Endothelial cell of umbilical vein (primary cell): ENCODE measurements at regions of chr3 and their contacts with region 1.

Region 1: GRCh38 chr3:110314512-110315114 is 757.0 kb upstream of the NECTIN3 start:
- DNase-seq: peak; percentile 56
- H3K4me3 ChIP-seq: no peak overlapping the region
- H3K27ac ChIP-seq: no peak overlapping the region
- H3K4me1 ChIP-seq: peaks cover 12% of the 10 kb centered on the region
- H3K27me3 ChIP-seq: no peaks in the 10 kb centered on the region
- CTCF ChIP-seq: peak; percentile 67 to 80
- POLR2A ChIP-seq: no peak

Region 2: GRCh38 chr3:109460961-109461360 is 853.7 kb before region 1 on chr3:
- CTCF ChIA-PET with region 1: no interaction called
- POLR2A ChIA-PET with region 1: no interaction called
- dilution Hi-C with region 1: no loop called
- intact Hi-C with region 1: no loop called
- DNase-seq: no peak
- H3K4me3 ChIP-seq: no peak overlapping the region
- H3K27ac ChIP-seq: no peak overlapping the region
- H3K4me1 ChIP-seq: no peaks in the 10 kb centered on the region
- H3K27me3 ChIP-seq: no peaks in the 10 kb centered on the region
- CTCF ChIP-seq: no peak
- POLR2A ChIP-seq: no peak

Region 3: GRCh38 chr3:110174908-110175307 is 139.7 kb before region 1 on chr3:
- CTCF ChIA-PET with region 1: no interaction called
- POLR2A ChIA-PET with region 1: no interaction called
- dilution Hi-C with region 1: no loop called
- intact Hi-C with region 1: no loop called
- DNase-seq: no peak
- H3K4me3 ChIP-seq: no peak overlapping the region
- H3K27ac ChIP-seq: no peak overlapping the region
- H3K4me1 ChIP-seq: no peaks in the 10 kb centered on the region
- H3K27me3 ChIP-seq: no peaks in the 10 kb centered on the region
- CTCF ChIP-seq: no peak
- POLR2A ChIP-seq: no peak

Region 4: DNA sequence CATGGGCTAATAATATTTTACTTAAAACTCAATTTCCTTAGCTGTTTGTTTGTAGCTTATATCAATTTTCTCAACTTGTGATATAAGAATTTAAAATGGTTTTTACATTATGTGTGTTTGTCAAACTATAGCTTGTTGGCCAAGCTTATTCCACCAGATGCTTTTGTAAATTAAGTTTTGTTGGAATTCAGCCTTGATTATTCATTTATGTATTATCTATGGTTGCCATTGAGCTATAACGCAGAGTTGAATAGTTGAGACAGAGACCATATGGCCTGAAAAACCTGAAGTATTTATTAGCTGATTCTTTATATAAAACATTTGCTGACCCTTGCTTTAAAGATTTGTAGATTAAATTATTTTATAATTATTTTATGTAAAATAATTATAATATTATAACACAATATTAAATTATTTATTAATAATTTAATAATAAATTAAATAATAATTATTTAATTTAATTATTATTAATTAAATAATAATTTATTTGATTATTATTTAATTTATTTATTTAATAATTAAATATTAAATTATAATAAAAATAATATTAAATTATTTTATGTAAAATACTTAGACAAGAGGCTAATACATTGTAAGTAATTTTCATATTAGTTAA is 22.6 kb before region 1 on chr3:
- CTCF ChIA-PET with region 1: interaction called, 13 read pairs
- POLR2A ChIA-PET with region 1: no interaction called
- dilution Hi-C with region 1: no loop called
- intact Hi-C with region 1: no loop called
- DNase-seq: no peak
- H3K4me3 ChIP-seq: no peak overlapping the region
- H3K27ac ChIP-seq: no peak overlapping the region
- H3K4me1 ChIP-seq: no peaks in the 10 kb centered on the region
- H3K27me3 ChIP-seq: no peaks in the 10 kb centered on the region
- CTCF ChIP-seq: no peak
- POLR2A ChIP-seq: no peak

Region 5: DNA sequence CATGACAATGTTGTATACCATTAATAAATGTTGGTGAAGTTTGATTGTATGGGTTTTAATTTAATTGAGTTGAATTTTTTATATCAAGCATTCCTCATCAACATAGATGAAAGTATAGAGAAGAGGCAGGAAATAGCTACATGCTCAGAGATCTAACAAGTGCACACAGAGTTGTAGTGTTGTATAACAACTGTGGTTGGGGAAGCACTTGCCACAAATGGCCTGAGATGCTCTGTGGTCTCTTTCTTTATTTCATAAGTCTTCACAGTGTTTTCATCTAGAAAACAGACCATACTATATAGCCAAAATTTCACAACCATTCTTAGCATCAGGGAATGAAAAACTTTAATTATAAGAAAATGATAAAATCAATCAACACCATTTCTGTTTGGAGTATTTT is 74.4 kb after region 1 on chr3:
- CTCF ChIA-PET with region 1: interaction called, 11 read pairs
- POLR2A ChIA-PET with region 1: no interaction called
- dilution Hi-C with region 1: no loop called
- intact Hi-C with region 1: no loop called
- DNase-seq: no peak
- H3K4me3 ChIP-seq: no peak overlapping the region
- H3K27ac ChIP-seq: no peak overlapping the region
- H3K4me1 ChIP-seq: peaks cover 13% of the 10 kb centered on the region
- H3K27me3 ChIP-seq: no peaks in the 10 kb centered on the region
- CTCF ChIP-seq: no peak
- POLR2A ChIP-seq: no peak

Region 6: GRCh38 chr3:110521019-110521418 is 206.4 kb after region 1 on chr3:
- CTCF ChIA-PET with region 1: interaction called, 4 read pairs
- POLR2A ChIA-PET with region 1: no interaction called
- dilution Hi-C with region 1: no loop called
- intact Hi-C with region 1: loop called (anchors 5 kb)
- DNase-seq: peak; percentile 97
- H3K4me3 ChIP-seq: no peak overlapping the region
- H3K27ac ChIP-seq: peak overlapping the region; percentile 76
- H3K4me1 ChIP-seq: peaks cover 18% of the 10 kb centered on the region
- H3K27me3 ChIP-seq: no peaks in the 10 kb centered on the region
- CTCF ChIP-seq: no peak
- POLR2A ChIP-seq: no peak

Region 7: GRCh38 chr3:110859336-110859735 is 544.7 kb after region 1 on chr3:
- CTCF ChIA-PET with region 1: no interaction called
- POLR2A ChIA-PET with region 1: no interaction called
- dilution Hi-C with region 1: no loop called
- intact Hi-C with region 1: no loop called
- DNase-seq: no peak
- H3K4me3 ChIP-seq: no peak overlapping the region
- H3K27ac ChIP-seq: no peak overlapping the region
- H3K4me1 ChIP-seq: no peaks in the 10 kb centered on the region
- H3K27me3 ChIP-seq: no peaks in the 10 kb centered on the region
- CTCF ChIP-seq: no peak
- POLR2A ChIP-seq: no peak

Region 8: GRCh38 chr3:111080413-111080812 is 765.8 kb after region 1 on chr3:
- CTCF ChIA-PET with region 1: interaction called, 13 read pairs
- POLR2A ChIA-PET with region 1: no interaction called
- dilution Hi-C with region 1: no loop called
- intact Hi-C with region 1: no loop called
- DNase-seq: peak; percentile 66
- H3K4me3 ChIP-seq: no peak overlapping the region
- H3K27ac ChIP-seq: no peak overlapping the region
- H3K4me1 ChIP-seq: peaks cover 2% of the 10 kb centered on the region
- H3K27me3 ChIP-seq: no peaks in the 10 kb centered on the region
- CTCF ChIP-seq: peak; percentile 30 to 33
- POLR2A ChIP-seq: no peak

Region 9: GRCh38 chr3:111252779-111253178 is 938.2 kb after region 1 on chr3:
- CTCF ChIA-PET with region 1: no interaction called
- POLR2A ChIA-PET with region 1: no interaction called
- dilution Hi-C with region 1: no loop called
- intact Hi-C with region 1: no loop called
- DNase-seq: no peak
- H3K4me3 ChIP-seq: no peak overlapping the region
- H3K27ac ChIP-seq: no peak overlapping the region
- H3K4me1 ChIP-seq: no peaks in the 10 kb centered on the region
- H3K27me3 ChIP-seq: no peaks in the 10 kb centered on the region
- CTCF ChIP-seq: no peak
- POLR2A ChIP-seq: no peak